ENCODE measurements at regions of chr19 and their contacts with region 1.

Region 1: GRCh38 chr19:58558623-58559274 is 338 bp upstream of the UBE2M start:
- DNase-seq: peak; percentile 89
- H3K4me3 ChIP-seq: peak overlapping the region; percentile 97
- CTCF ChIP-seq: no peak

Region 2: GRCh38 chr19:58473775-58474174 is 85.0 kb before region 1 on chr19:
- CTCF ChIA-PET with region 1: no interaction called
- POLR2A ChIA-PET with region 1: no interaction called
- DNase-seq: no peak
- H3K4me3 ChIP-seq: no peak overlapping the region; the same call in 1 of the 2 replicates
- CTCF ChIP-seq: no peak

Region 3: DNA sequence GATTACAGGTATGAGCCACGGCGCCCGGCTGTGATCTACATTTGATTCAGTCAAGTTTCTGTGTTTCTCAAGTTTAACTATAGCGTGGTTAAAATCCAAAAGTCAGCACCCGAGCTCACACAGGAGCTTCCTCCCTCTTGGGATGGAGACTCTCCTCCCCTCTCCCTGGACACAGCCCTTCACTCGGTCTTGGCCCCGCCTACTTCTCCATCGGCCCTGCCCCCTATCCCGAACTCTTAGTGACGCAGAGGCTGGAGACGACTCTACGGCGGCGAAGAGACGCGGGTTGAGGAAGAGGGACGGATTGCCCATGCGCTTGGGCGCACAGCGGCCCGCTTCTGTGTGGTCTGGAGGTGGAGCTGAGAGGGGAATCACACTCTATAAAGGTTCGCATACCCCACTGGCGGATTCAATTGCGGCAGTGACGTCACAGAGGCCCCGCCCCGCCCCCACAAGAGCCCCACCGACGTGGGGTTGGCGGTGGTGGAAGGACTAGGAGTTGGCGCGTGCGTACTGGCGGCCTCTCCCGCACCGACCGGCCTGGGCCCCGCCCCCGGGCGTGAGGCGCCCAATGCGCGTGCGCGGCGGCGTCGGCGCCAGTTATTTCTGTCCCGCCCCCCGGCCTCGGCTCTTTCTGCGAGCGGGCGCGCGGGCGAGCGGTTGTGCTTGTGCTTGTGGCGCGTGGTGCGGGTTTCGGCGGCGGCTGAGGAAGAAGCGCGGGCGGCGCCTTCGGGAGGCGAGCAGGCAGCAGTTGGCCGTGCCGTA is 14.7 kb before region 1 on chr19 and contains the start of gene TRIM28:
- CTCF ChIA-PET with region 1: interaction called, 22 read pairs
- POLR2A ChIA-PET with region 1: interaction called, 81 read pairs
- DNase-seq: peak; percentile 95
- H3K4me3 ChIP-seq: peak within 1 kb of the TSS; percentile 84
- CTCF ChIP-seq: no peak

Measured in AG04449 (cell line).